T-cell (primary cell): ENCODE measurements at regions of chr2 and their contacts with region 1.

Region 1: GRCh38 chr2:26846328-26847306 is 1.3 kb upstream of the DPYSL5 start:
- DNase-seq: peak in 32 of 35 experiments; percentile 12 to 77 (median 44)
- ATAC-seq: peak; percentile 66 to 77 (median 72)
- H3K4me3 ChIP-seq: peak overlapping the region in 1 of 2 donors; percentile 50
- H3K4me3 Mint-ChIP-seq: peak overlapping the region; percentile 63 to 71 (median 68)
- H3K27ac ChIP-seq: no peak overlapping the region
- H3K27ac Mint-ChIP-seq: no peak overlapping the region
- H3K4me1 ChIP-seq: peaks cover 4 to 39% of the 10 kb centered on the region in 2 experiments
- H3K4me1 Mint-ChIP-seq: peaks cover 12 to 19% (median 17%) of the 10 kb centered on the region in 3 donors
- H3K27me3 ChIP-seq: peaks cover 15 to 71% of the 10 kb centered on the region in 2 experiments
- H3K27me3 Mint-ChIP-seq: peaks cover 34 to 64% of the 10 kb centered on the region in 2 donors

Region 2: GRCh38 chr2:26816893-26817292 is 29.7 kb before region 1 on chr2:
- CTCF ChIA-PET with region 1: no interaction called
- POLR2A ChIA-PET with region 1: no interaction called
- DNase-seq: no peak
- ATAC-seq: no peak
- H3K4me3 ChIP-seq: no peak overlapping the region
- H3K4me3 Mint-ChIP-seq: no peak overlapping the region
- H3K27ac ChIP-seq: no peak overlapping the region
- H3K27ac Mint-ChIP-seq: no peak overlapping the region
- H3K4me1 ChIP-seq: peaks cover 3 to 6% of the 10 kb centered on the region in 2 experiments
- H3K4me1 Mint-ChIP-seq: peaks cover 2 to 9% (median 7%) of the 10 kb centered on the region in 3 donors
- H3K27me3 ChIP-seq: peaks cover 0 to 43% of the 10 kb centered on the region in 2 experiments
- H3K27me3 Mint-ChIP-seq: peaks cover 14 to 36% of the 10 kb centered on the region in 2 donors

Region 3: GRCh38 chr2:26922405-26923188 is 76.0 kb after region 1 on chr2:
- CTCF ChIA-PET with region 1: interaction called, 5 to 13 read pairs
- POLR2A ChIA-PET with region 1: interaction called in 1 of 2 experiments, 3 read pairs
- DNase-seq: peak in 27 of 35 experiments; percentile 7 to 58 (median 24)
- ATAC-seq: peak; percentile 71 to 83 (median 79)
- H3K4me3 ChIP-seq: no peak overlapping the region
- H3K4me3 Mint-ChIP-seq: no peak overlapping the region
- H3K27ac ChIP-seq: no peak overlapping the region
- H3K27ac Mint-ChIP-seq: no peak overlapping the region
- H3K4me1 ChIP-seq: peaks cover 0 to 4% of the 10 kb centered on the region in 2 experiments
- H3K4me1 Mint-ChIP-seq: peaks cover 7 to 11% (median 7%) of the 10 kb centered on the region in 3 donors
- H3K27me3 ChIP-seq: peaks cover 0 to 44% of the 10 kb centered on the region in 2 experiments
- H3K27me3 Mint-ChIP-seq: peaks cover 22 to 35% of the 10 kb centered on the region in 2 donors

Region 4: DNA sequence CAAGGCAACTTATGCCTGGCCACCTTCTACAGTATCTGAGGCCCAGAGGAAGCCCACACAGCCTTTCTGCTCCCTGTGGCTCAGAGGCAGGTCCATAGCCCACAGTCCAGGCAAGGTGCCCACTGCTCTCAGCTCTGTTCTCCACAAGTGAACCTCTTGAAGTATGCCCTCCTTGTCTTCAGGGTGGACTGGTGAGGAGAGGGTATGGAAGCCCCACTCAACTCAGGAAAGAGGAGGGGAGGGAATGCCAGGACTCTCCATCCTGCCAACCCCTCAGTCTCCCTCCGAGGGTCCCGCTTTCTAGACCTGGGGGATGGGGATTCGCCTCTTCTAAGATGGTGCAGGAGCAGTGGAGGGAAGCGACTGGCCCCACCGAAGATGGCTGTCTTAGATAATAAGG is 89.3 kb after region 1 on chr2:
- CTCF ChIA-PET with region 1: interaction called in 1 of 2 experiments, 10 read pairs
- POLR2A ChIA-PET with region 1: no interaction called
- DNase-seq: no peak
- ATAC-seq: no peak
- H3K4me3 ChIP-seq: no peak overlapping the region
- H3K4me3 Mint-ChIP-seq: no peak overlapping the region
- H3K27ac ChIP-seq: no peak overlapping the region
- H3K27ac Mint-ChIP-seq: no peak overlapping the region
- H3K4me1 ChIP-seq: no peaks in the 10 kb centered on the region
- H3K4me1 Mint-ChIP-seq: no peaks in the 10 kb centered on the region
- H3K27me3 ChIP-seq: peaks cover 2 to 20% of the 10 kb centered on the region in 2 experiments
- H3K27me3 Mint-ChIP-seq: peaks cover 11% of the 10 kb centered on the region in 2 donors

Region 5: GRCh38 chr2:27152786-27153510 is 306.3 kb after region 1 on chr2:
- CTCF ChIA-PET with region 1: no interaction called
- POLR2A ChIA-PET with region 1: no interaction called
- DNase-seq: no peak
- ATAC-seq: no peak
- H3K4me3 ChIP-seq: no peak overlapping the region
- H3K4me3 Mint-ChIP-seq: no peak overlapping the region
- H3K27ac ChIP-seq: no peak overlapping the region
- H3K27ac Mint-ChIP-seq: no peak overlapping the region
- H3K4me1 ChIP-seq: no peaks in the 10 kb centered on the region
- H3K4me1 Mint-ChIP-seq: no peaks in the 10 kb centered on the region
- H3K27me3 ChIP-seq: peaks cover 0 to 31% of the 10 kb centered on the region in 2 experiments
- H3K27me3 Mint-ChIP-seq: peaks cover 4 to 5% of the 10 kb centered on the region in 2 donors